H1 (cell line): ENCODE measurements at regions of chr11 and their contacts with region 1.

Region 1: DNA sequence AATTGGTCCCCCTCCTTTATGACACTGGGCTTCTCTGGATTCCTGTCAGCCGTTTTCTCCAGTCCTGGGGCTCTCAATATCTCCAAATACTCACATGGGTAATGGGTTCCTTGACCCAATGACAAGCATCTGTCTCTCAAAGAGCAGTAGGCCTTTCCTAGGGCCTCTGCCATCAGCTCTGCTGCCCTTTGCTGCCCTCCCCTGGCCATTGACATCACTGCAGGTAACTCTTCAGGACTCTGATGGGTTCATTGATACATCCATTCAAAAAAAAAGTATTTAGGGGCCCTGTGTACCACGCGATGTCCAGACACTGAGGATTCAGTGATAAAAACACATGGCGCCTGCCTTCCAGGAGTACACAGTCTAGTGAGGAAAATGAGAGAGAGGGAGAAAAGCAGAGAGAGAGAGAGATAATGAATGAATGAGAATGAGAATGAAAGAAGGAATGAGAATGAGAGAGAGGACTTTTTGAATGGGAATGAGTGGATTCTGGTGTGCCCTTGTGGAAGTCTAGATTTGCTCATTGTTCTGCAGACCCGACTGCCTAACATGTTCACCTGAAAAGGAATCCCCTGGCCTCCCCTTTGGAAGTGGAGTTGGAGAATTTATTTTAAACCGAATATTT is 42.6 kb upstream of the OLFML1 start:
- DNase-seq: peak; percentile 70 to 91
- H3K4me3 ChIP-seq: no peak overlapping the region
- H3K27ac ChIP-seq: no peak overlapping the region
- H3K4me1 ChIP-seq: no peaks in the 10 kb centered on the region
- H3K27me3 ChIP-seq: peaks cover 0 to 1% (median 0%) of the 10 kb centered on the region in 4 experiments; a peak in 3 of 7 replicates
- CTCF ChIP-seq: peak; percentile 83 to 90 (median 89)
- EP300 ChIP-seq: no peak
- POLR2A ChIP-seq: no peak
- RAD21 ChIP-seq: peak; percentile 98 to 99

Region 2: GRCh38 chr11:7098235-7098832 is 344.4 kb before region 1 on chr11:
- CTCF ChIA-PET with region 1: interaction called, 24 read pairs
- POLR2A ChIA-PET with region 1: no interaction called
- DNase-seq: no peak
- H3K4me3 ChIP-seq: no peak overlapping the region
- H3K27ac ChIP-seq: no peak overlapping the region
- H3K4me1 ChIP-seq: no peaks in the 10 kb centered on the region
- H3K27me3 ChIP-seq: no peaks in the 10 kb centered on the region
- CTCF ChIP-seq: peak in 2 of 3 experiments; percentile 69 to 71; a peak in 3 of 4 replicates
- EP300 ChIP-seq: no peak
- POLR2A ChIP-seq: no peak
- RAD21 ChIP-seq: peak; percentile 94 to 97

Region 3: DNA sequence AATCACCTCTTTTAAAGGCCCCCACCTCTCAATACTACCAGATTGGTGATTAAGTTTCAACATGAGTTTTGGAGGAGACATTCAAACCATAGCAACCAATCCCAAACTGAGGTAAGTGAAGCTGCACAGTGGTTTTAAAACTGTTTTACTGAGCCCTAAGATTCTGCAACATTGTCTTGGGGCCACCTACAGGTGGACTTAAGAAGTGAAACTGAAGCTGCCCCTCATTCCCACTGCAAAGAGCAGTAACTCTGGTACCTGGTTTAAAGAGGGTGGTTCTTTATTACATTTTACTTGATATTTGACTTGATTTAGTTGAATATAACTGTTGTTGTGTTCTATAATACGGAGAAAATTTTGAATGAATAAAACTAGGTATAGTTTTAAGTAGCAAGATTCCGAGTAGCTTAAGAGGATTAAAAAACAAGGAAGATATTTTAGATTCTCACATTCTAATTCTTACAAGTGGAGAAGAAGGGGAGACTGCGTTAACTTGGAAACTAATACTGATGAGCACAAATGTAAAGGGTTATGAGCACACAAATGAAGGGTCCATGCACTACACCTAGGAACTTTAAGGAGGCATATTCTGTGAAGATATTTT is 164.3 kb before region 1 on chr11:
- CTCF ChIA-PET with region 1: interaction called, 10 read pairs
- POLR2A ChIA-PET with region 1: no interaction called
- DNase-seq: no peak
- H3K4me3 ChIP-seq: no peak overlapping the region
- H3K27ac ChIP-seq: no peak overlapping the region
- H3K4me1 ChIP-seq: no peaks in the 10 kb centered on the region
- H3K27me3 ChIP-seq: no peaks in the 10 kb centered on the region
- CTCF ChIP-seq: peak in 2 of 3 experiments; percentile 59 to 70; a peak in 3 of 4 replicates
- EP300 ChIP-seq: no peak
- POLR2A ChIP-seq: no peak
- RAD21 ChIP-seq: peak; percentile 70 to 78

Region 4: DNA sequence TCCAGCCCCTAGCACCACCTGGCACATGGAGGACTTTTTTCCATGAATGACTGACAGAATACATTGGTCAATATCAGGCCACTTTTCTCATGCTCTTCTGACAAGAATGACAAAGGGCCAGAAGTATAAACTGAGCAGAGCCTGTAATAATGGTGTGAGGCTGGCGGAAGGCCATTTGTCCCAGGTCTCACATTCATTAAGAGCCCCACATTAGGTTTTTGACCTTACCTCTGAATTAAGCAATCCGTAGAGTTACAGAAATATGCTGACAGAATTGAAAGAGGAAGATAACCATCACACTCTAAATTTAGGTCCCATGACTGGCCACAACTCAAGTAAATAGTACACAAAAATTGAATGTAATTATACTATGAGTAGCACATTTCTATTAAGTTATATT is 135.8 kb before region 1 on chr11:
- CTCF ChIA-PET with region 1: no interaction called
- POLR2A ChIA-PET with region 1: no interaction called
- DNase-seq: no peak
- H3K4me3 ChIP-seq: no peak overlapping the region
- H3K27ac ChIP-seq: no peak overlapping the region
- H3K4me1 ChIP-seq: no peaks in the 10 kb centered on the region
- H3K27me3 ChIP-seq: no peaks in the 10 kb centered on the region
- CTCF ChIP-seq: no peak
- EP300 ChIP-seq: no peak
- POLR2A ChIP-seq: no peak
- RAD21 ChIP-seq: no peak

Region 5: DNA sequence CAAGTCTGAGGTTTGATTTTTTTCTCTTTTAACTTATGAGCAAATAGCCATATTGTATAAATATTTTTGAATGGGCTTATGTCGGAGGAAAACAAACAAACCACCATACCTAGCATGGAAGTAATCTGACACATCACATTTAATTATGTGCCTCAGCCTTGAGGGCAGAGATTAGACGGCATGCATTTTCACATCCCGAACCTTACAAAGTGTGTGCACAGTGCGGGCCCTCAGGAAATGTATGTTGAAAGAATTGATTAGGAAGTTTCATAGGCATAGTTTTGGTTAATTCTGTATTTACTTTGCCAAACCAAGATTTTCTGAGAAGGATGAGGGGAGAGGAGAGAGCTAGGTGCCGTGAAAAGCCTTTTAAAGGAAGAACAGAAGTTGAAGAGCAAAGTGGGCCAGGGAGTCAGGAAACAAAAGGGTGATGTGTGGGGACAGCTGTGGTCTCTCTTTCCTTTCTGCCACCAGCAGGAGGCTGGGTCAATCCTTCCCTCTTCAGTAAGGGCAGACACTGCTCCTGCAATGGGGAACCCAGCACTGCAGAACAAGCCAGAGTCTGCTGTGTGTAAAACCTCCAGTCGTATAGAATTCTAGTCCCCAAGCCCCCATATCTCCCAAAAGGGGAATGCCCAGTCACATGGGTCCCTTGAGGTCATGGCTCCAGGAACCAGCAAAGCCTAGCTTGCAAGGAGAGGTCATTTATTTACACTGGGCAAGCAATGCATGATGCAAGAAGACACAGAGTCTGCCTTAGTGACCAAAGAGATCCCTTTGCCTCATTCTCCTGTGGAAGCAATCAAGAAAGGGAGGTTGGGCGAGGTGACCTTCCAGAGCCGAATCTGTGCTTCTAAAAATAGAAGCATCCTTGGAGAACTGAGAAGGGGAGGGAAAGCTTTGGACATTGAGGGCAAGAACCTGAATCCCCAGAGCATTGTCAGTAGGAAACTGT is 28.5 kb before region 1 on chr11:
- CTCF ChIA-PET with region 1: interaction called, 42 read pairs
- POLR2A ChIA-PET with region 1: no interaction called
- DNase-seq: no peak
- H3K4me3 ChIP-seq: no peak overlapping the region
- H3K27ac ChIP-seq: no peak overlapping the region
- H3K4me1 ChIP-seq: peaks cover 6 to 13% (median 8%) of the 10 kb centered on the region in 4 experiments
- H3K27me3 ChIP-seq: no peaks in the 10 kb centered on the region
- CTCF ChIP-seq: peak in 1 of 3 experiments; percentile 5; a peak in 1 of 4 replicates
- EP300 ChIP-seq: no peak
- POLR2A ChIP-seq: no peak
- RAD21 ChIP-seq: no peak; a peak in 1 of 4 replicates

Region 6: DNA sequence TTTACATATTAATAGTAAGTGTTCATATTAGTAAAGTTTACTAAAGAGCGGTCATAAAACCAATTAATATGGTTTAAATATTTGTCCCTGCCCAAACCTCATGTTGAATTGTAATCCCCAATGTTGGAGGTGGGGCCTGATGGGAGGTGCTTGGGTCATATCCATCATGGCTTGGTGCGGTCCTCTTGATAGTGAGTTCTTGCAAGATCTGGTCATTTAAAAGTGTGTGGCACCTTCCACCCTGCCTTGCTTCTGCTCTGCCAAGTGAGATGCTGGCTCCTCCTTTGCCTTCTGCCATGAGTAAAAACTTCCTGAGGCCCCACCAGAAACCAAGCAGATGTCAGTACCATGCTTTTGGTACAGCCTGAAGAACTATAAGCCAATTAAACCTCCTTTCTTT is 12.2 kb before region 1 on chr11:
- CTCF ChIA-PET with region 1: interaction called, 10 read pairs
- POLR2A ChIA-PET with region 1: no interaction called
- DNase-seq: no peak
- H3K4me3 ChIP-seq: no peak overlapping the region
- H3K27ac ChIP-seq: no peak overlapping the region
- H3K4me1 ChIP-seq: no peaks in the 10 kb centered on the region; a peak in 1 of 7 replicates
- H3K27me3 ChIP-seq: no peaks in the 10 kb centered on the region
- CTCF ChIP-seq: no peak
- EP300 ChIP-seq: no peak
- POLR2A ChIP-seq: no peak
- RAD21 ChIP-seq: no peak

Region 7: GRCh38 chr11:7657306-7658025 is 214.8 kb after region 1 on chr11:
- CTCF ChIA-PET with region 1: interaction called, 28 read pairs
- POLR2A ChIA-PET with region 1: no interaction called
- DNase-seq: peak in 1 of 2 experiments; percentile 65
- H3K4me3 ChIP-seq: no peak overlapping the region
- H3K27ac ChIP-seq: no peak overlapping the region
- H3K4me1 ChIP-seq: no peaks in the 10 kb centered on the region
- H3K27me3 ChIP-seq: no peaks in the 10 kb centered on the region
- CTCF ChIP-seq: peak; percentile 74 to 90 (median 89)
- EP300 ChIP-seq: no peak
- POLR2A ChIP-seq: no peak
- RAD21 ChIP-seq: peak; percentile 96 to 97